HCT116 (cell line): ENCODE measurements at regions of chr2 and their contacts with region 1.

Region 1: GRCh38 chr2:218269899-218270720 is at the starts of genes AAMP and PNKD:
- DNase-seq: peak; percentile 98
- ATAC-seq: peak; percentile 87
- H3K4me3 ChIP-seq: peak within 1 kb of the TSS; percentile 91 to 97
- H3K27ac ChIP-seq: peak within 1 kb of the TSS; percentile 59
- H3K4me1 ChIP-seq: peaks cover 13 to 28% of the 10 kb centered on the region in 2 experiments
- H3K27me3 ChIP-seq: no peaks in the 10 kb centered on the region
- CTCF ChIP-seq: no peak
- POLR2A ChIP-seq: peak; percentile 66
- RAD21 ChIP-seq: no peak
- total RNA-seq, gene AAMP: 111 TPM
- total RNA-seq, gene PNKD: 58.1 TPM

Region 2: GRCh38 chr2:218186355-218186766 is 83.7 kb before region 1 on chr2:
- CTCF ChIA-PET with region 1: interaction called, 3 read pairs
- POLR2A ChIA-PET with region 1: no interaction called
- RAD21 ChIA-PET with region 1: no interaction called
- intact Hi-C with region 1: loop called (anchors 5 kb)
- DNase-seq: peak; percentile 75
- ATAC-seq: peak; percentile 98
- H3K4me3 ChIP-seq: no peak overlapping the region
- H3K27ac ChIP-seq: no peak overlapping the region
- H3K4me1 ChIP-seq: peaks cover 0 to 8% of the 10 kb centered on the region in 2 experiments; a peak in 2 of 4 replicates
- H3K27me3 ChIP-seq: no peaks in the 10 kb centered on the region
- CTCF ChIP-seq: peak; percentile 79 to 83 (median 82)
- POLR2A ChIP-seq: no peak
- RAD21 ChIP-seq: peak; percentile 87

Region 3: GRCh38 chr2:218286570-218287459 is 16.7 kb after region 1 on chr2:
- CTCF ChIA-PET with region 1: interaction called, 6 read pairs
- POLR2A ChIA-PET with region 1: interaction called, 19 read pairs
- RAD21 ChIA-PET with region 1: interaction called in 1 of 2 experiments, 3 read pairs
- intact Hi-C with region 1: no loop called
- DNase-seq: peak; percentile 88
- ATAC-seq: peak; percentile 93
- H3K4me3 ChIP-seq: peak overlapping the region; percentile 27 to 60
- H3K27ac ChIP-seq: peak overlapping the region; percentile 81
- H3K4me1 ChIP-seq: peaks cover 33 to 71% of the 10 kb centered on the region in 2 experiments
- H3K27me3 ChIP-seq: no peaks in the 10 kb centered on the region
- CTCF ChIP-seq: no peak
- POLR2A ChIP-seq: no peak
- RAD21 ChIP-seq: no peak

Region 4: DNA sequence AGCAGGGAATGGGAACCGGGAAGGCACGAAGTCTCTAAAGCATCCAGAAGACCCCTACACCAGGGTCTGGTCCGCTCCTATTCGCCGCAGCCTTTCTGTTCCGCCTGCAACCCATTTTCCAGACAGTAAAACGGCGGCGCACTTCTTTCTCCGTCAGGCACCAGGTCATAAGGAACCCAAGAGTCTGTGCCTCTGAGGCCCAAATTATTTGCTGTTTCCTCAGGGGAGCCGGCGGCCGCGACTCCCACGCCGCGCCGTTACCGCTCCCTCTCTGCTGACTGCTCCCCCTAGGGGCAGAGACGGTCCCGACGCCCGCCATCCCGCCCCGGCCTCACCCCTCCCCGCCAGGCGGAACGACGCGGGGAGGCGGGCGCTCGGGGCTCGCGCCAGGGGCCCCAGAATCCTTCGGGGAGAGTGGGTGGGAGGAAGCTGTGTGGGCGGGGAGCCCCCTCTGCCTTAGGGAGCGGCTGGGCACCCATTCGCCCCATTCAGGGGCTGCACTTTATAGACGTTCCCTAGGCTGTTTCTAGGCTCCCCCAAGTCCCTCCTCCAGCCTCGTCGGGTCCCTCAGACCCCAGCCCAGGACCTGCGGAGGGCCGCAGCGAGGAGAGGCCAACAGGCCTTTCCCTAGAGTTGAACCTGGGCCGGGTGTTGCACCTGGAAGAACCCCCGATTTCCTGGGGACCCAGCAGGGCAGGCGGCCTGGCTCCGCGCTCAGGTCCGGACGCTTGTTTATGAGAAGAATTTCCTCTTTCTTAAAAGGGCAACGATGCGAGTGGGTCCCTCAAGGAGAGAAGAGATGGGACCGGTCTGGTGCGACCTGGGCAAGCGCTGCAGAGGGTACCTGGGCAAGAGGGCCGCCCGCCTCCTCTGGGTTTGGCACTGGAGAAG is 125.9 kb after region 1 on chr2:
- CTCF ChIA-PET with region 1: interaction called, 22 read pairs
- POLR2A ChIA-PET with region 1: interaction called, 5 read pairs
- RAD21 ChIA-PET with region 1: no interaction called
- intact Hi-C with region 1: loop called (anchors 1 kb)
- DNase-seq: peak; percentile 96
- ATAC-seq: peak; percentile 61
- H3K4me3 ChIP-seq: peak overlapping the region; percentile 63 to 85
- H3K27ac ChIP-seq: peak overlapping the region; percentile 99
- H3K4me1 ChIP-seq: peaks cover 24 to 57% of the 10 kb centered on the region in 2 experiments
- H3K27me3 ChIP-seq: no peaks in the 10 kb centered on the region
- CTCF ChIP-seq: peak in 2 of 3 experiments; percentile 76 to 83; a peak in 4 of 6 replicates
- POLR2A ChIP-seq: peak; percentile 15
- RAD21 ChIP-seq: no peak

Region 5: GRCh38 chr2:218547978-218548377 is 277.9 kb after region 1 on chr2:
- CTCF ChIA-PET with region 1: no interaction called
- POLR2A ChIA-PET with region 1: no interaction called
- RAD21 ChIA-PET with region 1: no interaction called
- intact Hi-C with region 1: no loop called
- DNase-seq: no peak
- ATAC-seq: no peak
- H3K4me3 ChIP-seq: no peak overlapping the region
- H3K27ac ChIP-seq: no peak overlapping the region
- H3K4me1 ChIP-seq: no peaks in the 10 kb centered on the region
- H3K27me3 ChIP-seq: no peaks in the 10 kb centered on the region
- CTCF ChIP-seq: no peak
- POLR2A ChIP-seq: no peak
- RAD21 ChIP-seq: no peak

Region 6: DNA sequence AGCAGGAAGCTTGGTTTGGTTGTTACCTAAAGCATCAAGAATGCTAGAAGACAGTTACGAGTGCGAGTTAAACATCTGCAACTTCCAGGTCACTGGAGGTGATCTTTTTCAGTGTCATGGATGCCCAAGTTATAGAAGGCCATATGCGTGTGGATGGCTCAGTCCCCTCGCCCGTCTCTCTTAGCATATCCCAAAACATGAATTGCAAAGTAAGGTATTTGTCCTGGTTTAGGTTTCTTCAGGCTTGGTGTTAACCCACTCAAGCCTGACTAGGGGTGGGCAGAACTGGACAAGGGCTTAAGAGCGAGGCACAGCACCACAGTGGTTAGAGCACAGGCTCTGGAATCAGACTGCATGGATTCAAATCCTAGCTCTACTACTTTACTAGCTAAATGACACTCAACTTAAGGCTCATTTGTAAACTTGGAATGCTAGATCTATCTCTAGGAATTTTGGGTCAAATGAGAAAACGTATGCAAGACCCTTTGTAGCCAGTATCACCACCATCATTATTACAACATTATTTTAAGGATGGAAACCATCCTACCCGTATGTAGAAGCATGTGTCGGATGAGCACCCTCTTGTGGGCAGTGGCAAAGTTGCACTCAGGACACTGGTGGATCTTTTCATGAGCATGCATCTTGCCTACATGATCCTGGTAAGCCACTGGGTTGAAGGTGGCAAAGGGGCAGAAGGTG is 378.1 kb after region 1 on chr2:
- CTCF ChIA-PET with region 1: interaction called, 3 read pairs
- POLR2A ChIA-PET with region 1: no interaction called
- RAD21 ChIA-PET with region 1: no interaction called
- intact Hi-C with region 1: loop called (anchors 1 kb)
- DNase-seq: peak; percentile 32
- ATAC-seq: peak; percentile 89
- H3K4me3 ChIP-seq: no peak overlapping the region
- H3K27ac ChIP-seq: no peak overlapping the region
- H3K4me1 ChIP-seq: no peaks in the 10 kb centered on the region
- H3K27me3 ChIP-seq: no peaks in the 10 kb centered on the region
- CTCF ChIP-seq: peak; percentile 82 to 89 (median 89)
- POLR2A ChIP-seq: no peak
- RAD21 ChIP-seq: peak; percentile 87